GM12878 (cell line): ENCODE measurements at regions of chr22 and their contacts with region 1.

Region 1: DNA sequence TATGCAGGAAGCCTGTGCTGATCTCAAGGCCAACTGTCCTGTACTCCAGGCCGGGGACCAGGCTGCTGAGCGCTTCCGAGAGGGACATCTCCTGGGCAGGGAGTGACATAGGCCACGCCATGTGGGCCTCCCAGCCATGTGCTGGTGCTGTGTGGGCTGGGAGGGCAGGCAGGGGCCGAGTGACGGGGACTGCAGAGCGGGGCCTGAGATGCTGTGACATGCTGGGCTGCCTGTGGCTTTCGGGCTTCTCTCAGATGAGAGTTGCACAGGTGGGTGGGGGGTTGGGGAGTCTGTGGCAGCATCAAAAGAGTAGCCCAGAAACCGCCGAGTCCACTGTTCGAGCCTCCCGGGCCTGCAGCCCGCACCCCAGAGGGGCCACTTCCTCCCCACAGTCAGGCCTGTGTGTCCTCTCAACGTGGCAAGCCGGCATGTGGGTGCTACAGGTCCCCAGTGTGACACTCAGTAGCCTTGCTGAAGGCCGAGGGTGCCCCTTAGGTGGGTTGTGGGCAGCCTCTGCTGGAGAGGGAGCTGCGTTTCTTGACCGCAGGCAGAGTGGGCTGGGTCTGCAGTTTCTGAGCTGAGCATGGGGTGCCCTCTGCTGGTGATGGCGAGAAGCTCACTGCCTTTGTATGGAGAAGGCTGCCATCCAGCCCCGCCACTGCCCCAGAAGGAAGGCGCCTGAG is 101.2 kb downstream of the BCR start:
- DNase-seq: peak; percentile 25
- ATAC-seq: peak; percentile 94
- H3K4me3 ChIP-seq: no peak overlapping the region
- H3K27ac ChIP-seq: 0 out of 2 replicates have a peak overlapping the region, but pooled peaks have one; percentile 13
- H3K4me1 ChIP-seq: peaks cover 11% of the 10 kb centered on the region
- H3K27me3 ChIP-seq: no peaks in the 10 kb centered on the region
- CTCF ChIP-seq: peak; percentile 93 to 96 (median 94); a peak in 5 of 6 replicates
- EP300 ChIP-seq: no peak
- POLR2A ChIP-seq: no peak
- RAD21 ChIP-seq: peak; percentile 91

Region 2: DNA sequence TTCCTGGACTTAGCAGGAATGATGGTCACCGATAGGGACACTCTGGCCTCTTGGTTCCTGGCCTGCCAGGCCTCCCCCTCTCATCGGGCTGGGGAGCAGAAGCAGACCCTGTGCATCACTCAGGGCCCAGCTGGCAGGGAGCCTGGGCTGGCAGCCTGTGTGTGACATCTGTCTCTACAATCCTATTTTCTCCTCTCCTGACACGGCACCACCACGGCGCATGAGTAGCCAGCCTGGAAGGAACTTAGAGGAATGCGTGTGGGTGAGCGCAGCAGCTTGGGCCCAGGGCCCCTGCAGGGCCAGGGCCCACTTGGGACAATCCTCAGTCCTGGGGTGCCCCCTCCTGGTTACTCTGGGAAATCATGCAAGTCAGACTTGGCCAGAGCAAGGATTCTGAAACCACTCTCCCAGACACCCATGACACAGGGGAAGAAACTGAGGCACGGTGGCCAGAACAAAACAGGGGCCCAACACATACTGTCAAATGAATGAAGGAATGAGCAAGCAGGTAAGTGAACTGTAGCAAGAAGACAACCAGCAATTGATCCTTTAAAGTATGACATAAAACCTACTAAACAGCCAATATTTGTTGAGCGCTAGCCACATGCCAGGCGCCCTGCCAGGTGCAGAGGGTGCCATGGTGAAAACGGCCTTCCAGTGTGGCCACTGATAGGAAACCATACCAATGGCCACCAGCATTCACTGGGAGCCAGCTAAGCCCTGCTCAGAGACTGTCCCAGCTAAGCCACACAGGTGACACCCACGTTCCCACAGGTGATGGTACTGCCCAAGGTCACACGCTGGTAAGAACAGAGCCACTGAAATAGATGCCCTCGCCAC is 153.1 kb before region 1 on chr22:
- CTCF ChIA-PET with region 1: interaction called, 12 read pairs
- POLR2A ChIA-PET with region 1: no interaction called
- RAD21 ChIA-PET with region 1: interaction called, 8 read pairs
- SMC1A ChIA-PET with region 1: interaction called, 4 read pairs
- in situ Hi-C with region 1: no loop called
- intact Hi-C with region 1: no loop called
- DNase-seq: no peak
- ATAC-seq: peak; percentile 97
- H3K4me3 ChIP-seq: no peak overlapping the region
- H3K27ac ChIP-seq: no peak overlapping the region
- H3K4me1 ChIP-seq: no peaks in the 10 kb centered on the region
- H3K27me3 ChIP-seq: no peaks in the 10 kb centered on the region
- CTCF ChIP-seq: peak; percentile 80 to 90 (median 82)
- EP300 ChIP-seq: no peak
- POLR2A ChIP-seq: no peak
- RAD21 ChIP-seq: peak; percentile 95

Region 3: DNA sequence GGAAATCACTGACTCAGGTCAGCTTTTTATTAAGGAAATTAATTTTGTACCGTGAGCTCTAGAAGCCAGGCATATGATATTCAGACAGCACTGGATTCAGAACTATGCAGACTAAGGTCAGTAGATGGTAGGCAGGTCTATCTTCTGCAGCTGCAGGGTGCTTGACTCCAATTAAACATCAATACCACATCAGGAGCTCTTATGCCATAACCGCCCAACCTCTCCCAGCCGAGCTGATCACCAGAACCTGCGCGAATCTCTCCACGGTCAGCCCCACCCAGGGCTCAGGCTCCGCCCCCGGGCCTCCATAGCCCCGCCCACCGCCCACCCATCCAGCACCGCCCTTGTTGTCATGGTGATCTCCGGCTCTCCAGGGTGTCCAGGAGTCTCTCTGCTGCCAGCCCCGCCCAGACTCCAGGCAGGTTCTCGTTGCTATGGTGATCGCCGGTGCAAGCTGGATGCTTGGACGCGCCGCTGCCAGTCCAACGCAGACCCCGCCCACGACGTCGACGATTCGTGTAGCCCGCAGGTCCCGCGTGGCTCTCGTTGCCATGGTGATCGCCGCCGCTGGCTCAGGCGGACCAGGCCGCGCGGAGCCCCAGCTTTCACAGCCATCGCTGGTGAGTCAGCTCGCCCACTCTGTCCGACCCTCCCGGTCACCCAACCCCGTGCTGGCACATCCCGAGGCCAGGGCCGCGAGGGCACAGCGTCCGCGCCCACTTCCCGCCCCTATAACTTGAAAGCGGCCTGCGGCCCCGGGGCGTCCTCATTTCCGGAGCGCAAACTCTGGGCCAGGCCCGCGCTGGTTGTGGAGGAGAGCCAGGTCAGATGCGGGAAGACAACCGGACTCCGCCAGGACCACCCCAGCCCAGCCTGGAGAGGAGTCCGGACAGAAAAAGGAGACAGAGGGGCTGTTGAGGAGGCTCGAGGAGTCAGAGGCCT is 136.3 kb before region 1 on chr22 and contains the start of gene RAB36:
- CTCF ChIA-PET with region 1: interaction called, 7 read pairs
- POLR2A ChIA-PET with region 1: interaction called, 4 read pairs
- RAD21 ChIA-PET with region 1: interaction called, 13 read pairs
- SMC1A ChIA-PET with region 1: interaction called, 5 read pairs
- in situ Hi-C with region 1: no loop called
- intact Hi-C with region 1: no loop called
- DNase-seq: peak; percentile 77
- ATAC-seq: peak; percentile 73
- H3K4me3 ChIP-seq: peak within 1 kb of the TSS; percentile 43
- H3K27ac ChIP-seq: no peak within 1 kb of the TSS
- H3K4me1 ChIP-seq: peaks cover 41% of the 10 kb centered on the region
- H3K27me3 ChIP-seq: no peaks in the 10 kb centered on the region
- CTCF ChIP-seq: no peak
- EP300 ChIP-seq: no peak
- POLR2A ChIP-seq: no peak
- RAD21 ChIP-seq: no peak
- polyA plus RNA-seq, gene RAB36: 0.45 to 0.46 TPM

Region 4: GRCh38 chr22:23200898-23201297 is 80.6 kb before region 1 on chr22:
- CTCF ChIA-PET with region 1: interaction called, 10 read pairs
- POLR2A ChIA-PET with region 1: no interaction called
- RAD21 ChIA-PET with region 1: no interaction called
- SMC1A ChIA-PET with region 1: no interaction called
- in situ Hi-C with region 1: no loop called
- intact Hi-C with region 1: no loop called
- DNase-seq: no peak
- ATAC-seq: no peak
- H3K4me3 ChIP-seq: no peak overlapping the region
- H3K27ac ChIP-seq: no peak overlapping the region
- H3K4me1 ChIP-seq: no peaks in the 10 kb centered on the region
- H3K27me3 ChIP-seq: no peaks in the 10 kb centered on the region
- CTCF ChIP-seq: no peak
- EP300 ChIP-seq: no peak
- POLR2A ChIP-seq: no peak
- RAD21 ChIP-seq: no peak